ENCODE measurements at regions of chr4 and their contacts with region 1.

Region 1: DNA sequence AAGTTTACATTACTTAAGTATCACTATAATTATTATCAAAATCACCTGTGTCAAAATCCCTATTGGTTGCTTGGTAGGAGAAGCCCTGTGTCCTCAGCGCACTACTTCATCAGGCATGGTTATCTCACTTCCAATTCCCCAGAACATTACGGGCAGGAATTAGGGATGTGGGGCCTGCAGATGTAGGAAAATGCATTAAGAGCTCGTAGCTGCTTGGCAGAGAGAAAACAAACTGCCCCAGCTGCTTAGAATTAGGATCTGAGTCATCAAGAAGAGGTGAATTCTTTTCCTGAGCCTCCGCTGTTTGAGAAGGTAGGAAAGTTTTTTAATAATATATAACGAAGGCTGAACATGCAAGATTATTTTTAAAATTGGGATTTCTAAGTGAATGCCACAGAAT is 31.1 kb upstream of the CLNK start:
- DNase-seq: no peak
- H3K4me3 Mint-ChIP-seq: no peak overlapping the region
- H3K27ac Mint-ChIP-seq: no peak overlapping the region
- H3K4me1 Mint-ChIP-seq: no peaks in the 10 kb centered on the region
- H3K27me3 Mint-ChIP-seq: no peaks in the 10 kb centered on the region
- CTCF ChIP-seq: no peak

Region 2: GRCh38 chr4:10554694-10555093 is 161.0 kb before region 1 on chr4:
- CTCF ChIA-PET with region 1: no interaction called
- intact Hi-C with region 1: loop called (anchors 10 kb)
- DNase-seq: peak; percentile 39
- H3K4me3 Mint-ChIP-seq: no peak overlapping the region
- H3K27ac Mint-ChIP-seq: no peak overlapping the region
- H3K4me1 Mint-ChIP-seq: peaks cover 8% of the 10 kb centered on the region
- H3K27me3 Mint-ChIP-seq: no peaks in the 10 kb centered on the region
- CTCF ChIP-seq: peak; percentile 39

Region 3: DNA sequence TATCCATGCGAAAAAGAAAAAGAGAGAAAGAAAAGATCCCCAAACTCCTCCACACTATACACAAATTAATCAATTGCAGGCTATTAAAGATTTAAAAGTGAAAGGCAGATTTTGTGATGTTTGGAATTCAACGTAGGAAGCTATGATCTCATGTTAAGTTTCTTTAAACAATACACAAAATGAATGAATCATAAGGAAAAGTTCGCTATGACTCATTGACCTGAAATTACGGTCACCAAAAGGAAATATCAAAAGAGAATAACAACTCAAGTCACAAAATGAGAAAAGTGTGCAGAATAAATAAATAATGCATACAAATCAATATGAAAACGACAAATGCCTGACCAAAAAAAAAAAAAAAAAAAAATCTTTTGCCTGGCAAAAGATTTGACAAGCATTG is 59.7 kb before region 1 on chr4:
- CTCF ChIA-PET with region 1: no interaction called
- intact Hi-C with region 1: loop called (anchors 1 kb)
- DNase-seq: no peak
- H3K4me3 Mint-ChIP-seq: peak overlapping the region; percentile 64
- H3K27ac Mint-ChIP-seq: peak overlapping the region; percentile 87
- H3K4me1 Mint-ChIP-seq: peaks cover 29% of the 10 kb centered on the region
- H3K27me3 Mint-ChIP-seq: no peaks in the 10 kb centered on the region
- CTCF ChIP-seq: no peak